Caco-2 (cell line): ENCODE measurements at regions of chr20 and their contacts with region 1.

Region 1: DNA sequence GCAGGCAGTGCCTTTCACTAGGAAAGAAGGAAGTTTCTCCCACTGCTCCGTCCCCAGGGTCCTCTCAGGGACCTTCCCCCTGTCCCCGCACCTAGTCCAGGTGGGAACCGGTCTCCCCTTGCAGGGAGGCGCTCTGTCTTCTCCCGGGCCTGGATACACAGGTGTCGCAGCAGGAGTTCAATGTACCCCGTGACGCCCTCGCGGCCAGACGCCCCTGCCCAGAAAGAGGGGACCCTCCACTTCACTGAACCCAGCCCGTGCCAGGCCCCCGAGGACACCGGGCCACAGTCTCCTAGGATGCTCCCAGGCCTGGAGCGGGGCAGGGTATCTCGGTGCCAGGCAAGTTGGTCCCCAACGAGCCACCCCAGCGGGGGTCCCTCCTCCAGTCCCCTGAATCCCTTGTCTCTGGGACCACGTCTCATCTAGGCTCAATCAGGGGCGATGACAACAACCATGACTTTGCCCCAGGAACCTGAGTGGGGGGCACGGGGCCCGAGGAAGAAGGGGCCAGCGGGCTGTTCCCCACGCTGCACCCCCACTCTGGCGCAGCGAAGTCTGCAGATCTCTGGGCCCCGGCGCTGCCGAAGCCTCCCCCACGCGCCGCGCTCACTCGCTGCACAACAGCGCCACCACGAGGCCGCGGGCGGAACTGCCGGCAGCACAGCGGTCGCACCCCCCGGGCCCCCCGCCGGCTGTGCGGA is 103.0 kb downstream of the EDN3 start:
- DNase-seq: peak in 1 of 2 experiments; percentile 92
- H3K4me3 ChIP-seq: no peak overlapping the region; the same call in 1 of the 2 replicates
- H3K4me3 Mint-ChIP-seq: peak overlapping the region; percentile 13
- H3K27ac Mint-ChIP-seq: no peak overlapping the region
- H3K4me1 ChIP-seq: peaks cover 20% of the 10 kb centered on the region
- H3K4me1 Mint-ChIP-seq: no peaks in the 10 kb centered on the region
- H3K27me3 ChIP-seq: no peaks in the 10 kb centered on the region; the same call in 1 of the 2 replicates
- H3K27me3 Mint-ChIP-seq: peaks cover 19% of the 10 kb centered on the region
- CTCF ChIP-seq: peak; percentile 99 to 100

Region 2: GRCh38 chr20:58864350-58864749 is 539.1 kb before region 1 on chr20:
- CTCF ChIA-PET with region 1: interaction called, 3 read pairs
- POLR2A ChIA-PET with region 1: no interaction called
- intact Hi-C with region 1: loop called (anchors 1 kb)
- DNase-seq: peak; percentile 43 to 51
- H3K4me3 ChIP-seq: no peak overlapping the region
- H3K4me3 Mint-ChIP-seq: no peak overlapping the region
- H3K27ac Mint-ChIP-seq: no peak overlapping the region
- H3K4me1 ChIP-seq: no peaks in the 10 kb centered on the region
- H3K4me1 Mint-ChIP-seq: no peaks in the 10 kb centered on the region
- H3K27me3 ChIP-seq: no peaks in the 10 kb centered on the region
- H3K27me3 Mint-ChIP-seq: peaks cover 25% of the 10 kb centered on the region
- CTCF ChIP-seq: peak; percentile 63 to 71

Region 3: DNA sequence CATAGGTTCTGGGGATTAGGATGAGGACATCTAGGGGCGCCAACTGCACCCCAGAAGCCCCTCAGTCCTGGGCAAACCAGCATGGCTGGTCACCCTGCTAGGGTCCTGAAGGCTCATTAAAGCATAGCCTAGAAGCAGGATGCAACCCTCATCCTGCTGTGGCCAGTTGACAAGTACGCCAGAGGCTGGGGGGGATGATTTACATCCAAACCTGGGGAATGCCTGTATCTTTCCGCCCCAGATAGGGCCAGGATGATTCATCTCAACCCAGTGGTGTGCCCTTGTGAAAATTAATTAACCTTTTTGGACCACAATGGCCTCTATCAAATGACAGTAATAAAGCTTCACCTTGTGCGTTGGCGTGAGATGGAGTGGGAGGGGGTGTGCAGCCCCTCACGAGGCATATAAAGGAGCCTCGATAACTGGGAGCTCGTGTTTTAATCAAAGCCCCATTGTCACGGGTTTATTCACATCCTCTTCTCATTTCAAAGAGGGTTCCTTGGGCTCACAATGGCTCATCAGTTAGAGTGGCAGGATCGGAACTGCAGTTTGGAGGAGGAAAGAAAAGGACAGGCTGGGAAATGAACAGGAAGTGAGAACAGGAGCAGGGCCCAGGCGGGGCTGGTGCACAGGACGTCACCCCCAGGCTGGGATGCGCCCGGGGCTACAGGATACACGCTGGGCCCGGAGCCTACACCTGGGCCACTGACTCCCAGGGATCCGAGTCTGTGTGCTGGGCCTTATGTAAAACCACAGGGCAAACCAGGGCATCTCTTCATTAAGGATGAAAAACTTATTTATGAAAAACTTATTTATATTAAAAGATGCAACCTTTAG is 79.2 kb after region 1 on chr20:
- CTCF ChIA-PET with region 1: no interaction called
- POLR2A ChIA-PET with region 1: no interaction called
- intact Hi-C with region 1: no loop called
- DNase-seq: peak in 1 of 2 experiments; percentile 34
- H3K4me3 ChIP-seq: no peak overlapping the region
- H3K4me3 Mint-ChIP-seq: no peak overlapping the region
- H3K27ac Mint-ChIP-seq: no peak overlapping the region
- H3K4me1 ChIP-seq: no peaks in the 10 kb centered on the region
- H3K4me1 Mint-ChIP-seq: no peaks in the 10 kb centered on the region
- H3K27me3 ChIP-seq: 0 out of 2 replicates have a peak, but pooled peaks cover 2% of the 10 kb centered on the region
- H3K27me3 Mint-ChIP-seq: peaks cover 33% of the 10 kb centered on the region
- CTCF ChIP-seq: no peak